ENCODE measurements at regions of chr16 and their contacts with region 1.

Region 1: DNA sequence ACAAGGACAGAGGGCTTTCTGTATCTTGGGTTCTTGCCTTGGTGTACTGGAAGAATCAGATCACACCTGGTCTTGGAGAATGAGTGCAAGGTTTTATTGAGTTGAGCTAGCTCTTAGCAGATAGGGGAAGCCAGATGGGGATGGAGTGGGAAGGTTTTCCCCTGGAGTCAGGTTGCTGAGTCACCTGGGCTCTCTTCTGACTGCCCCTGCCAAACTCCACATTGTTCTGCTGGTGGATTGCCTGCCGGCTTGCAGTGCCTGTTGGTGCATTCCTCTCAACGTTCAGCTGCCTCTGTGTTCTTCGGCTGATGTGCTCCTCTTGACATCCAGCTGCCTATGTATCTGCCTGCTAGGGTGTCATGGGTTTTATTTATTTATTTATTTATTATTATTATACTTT is 1431.1 kb downstream of the CDH8 start:
- DNase-seq: no peak
- ATAC-seq: no peak
- H3K4me3 Mint-ChIP-seq: no peak overlapping the region
- H3K27ac Mint-ChIP-seq: no peak overlapping the region
- H3K4me1 Mint-ChIP-seq: no peaks in the 10 kb centered on the region
- H3K27me3 Mint-ChIP-seq: no peaks in the 10 kb centered on the region

Region 2: GRCh38 chr16:60127196-60127595 is 478.0 kb before region 1 on chr16:
- CTCF ChIA-PET with region 1: no interaction called
- POLR2A ChIA-PET with region 1: no interaction called
- intact Hi-C with region 1: no loop called
- DNase-seq: no peak
- ATAC-seq: no peak
- H3K4me3 Mint-ChIP-seq: no peak overlapping the region
- H3K27ac Mint-ChIP-seq: no peak overlapping the region
- H3K4me1 Mint-ChIP-seq: no peaks in the 10 kb centered on the region
- H3K27me3 Mint-ChIP-seq: no peaks in the 10 kb centered on the region

Region 3: GRCh38 chr16:60541535-60541934 is 63.6 kb before region 1 on chr16:
- CTCF ChIA-PET with region 1: no interaction called
- POLR2A ChIA-PET with region 1: no interaction called
- intact Hi-C with region 1: loop called in 1 of 2 experiments (anchors 10 kb)
- DNase-seq: no peak
- ATAC-seq: no peak
- H3K4me3 Mint-ChIP-seq: no peak overlapping the region
- H3K27ac Mint-ChIP-seq: no peak overlapping the region
- H3K4me1 Mint-ChIP-seq: no peaks in the 10 kb centered on the region
- H3K27me3 Mint-ChIP-seq: no peaks in the 10 kb centered on the region

Region 4: GRCh38 chr16:60771138-60771537 is 166.0 kb after region 1 on chr16:
- CTCF ChIA-PET with region 1: no interaction called
- POLR2A ChIA-PET with region 1: no interaction called
- intact Hi-C with region 1: no loop called
- DNase-seq: no peak
- ATAC-seq: no peak
- H3K4me3 Mint-ChIP-seq: no peak overlapping the region
- H3K27ac Mint-ChIP-seq: no peak overlapping the region
- H3K4me1 Mint-ChIP-seq: no peaks in the 10 kb centered on the region
- H3K27me3 Mint-ChIP-seq: no peaks in the 10 kb centered on the region

Measured in activated CD4-positive, alpha-beta T cell treated with anti-CD3 and anti-CD28 coated beads for 36 hours (primary cell).